ENCODE measurements at regions of chr17 and their contacts with region 1.

Region 1: GRCh38 chr17:46154151-46154816 is 38.9 kb downstream of the KANSL1 start:
- DNase-seq: no peak
- H3K4me3 Mint-ChIP-seq: peak overlapping the region; percentile 26
- H3K27ac Mint-ChIP-seq: peak overlapping the region; percentile 76
- H3K4me1 Mint-ChIP-seq: peaks cover 63% of the 10 kb centered on the region
- H3K27me3 Mint-ChIP-seq: no peaks in the 10 kb centered on the region

Region 2: DNA sequence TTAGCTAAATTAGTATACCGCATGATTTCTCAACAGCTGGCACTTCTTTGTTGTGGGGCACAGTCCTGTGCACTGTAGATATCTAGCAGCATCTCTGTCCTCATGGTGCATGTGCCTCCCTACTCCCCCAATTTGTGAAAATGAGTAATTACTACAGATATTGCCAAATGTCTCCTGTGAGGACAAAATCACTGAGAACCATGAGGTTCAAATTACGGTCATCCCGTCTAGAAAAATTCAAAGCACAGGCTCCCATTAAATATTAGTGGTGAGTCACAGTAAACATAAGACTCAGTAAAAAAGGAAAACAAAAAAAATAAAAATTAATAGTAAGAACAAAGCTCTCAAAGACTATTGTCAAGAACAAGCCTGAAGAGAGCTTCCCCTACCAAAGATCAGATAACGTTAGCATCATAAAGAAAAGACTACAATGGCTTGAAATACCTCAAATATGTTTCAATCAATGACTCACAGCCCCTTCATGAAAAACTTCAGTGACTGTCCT is 97.4 kb before region 1 on chr17:
- intact Hi-C with region 1: loop called (anchors 2 kb)
- DNase-seq: no peak
- H3K4me3 Mint-ChIP-seq: no peak overlapping the region
- H3K27ac Mint-ChIP-seq: peak overlapping the region; percentile 78
- H3K4me1 Mint-ChIP-seq: peaks cover 44% of the 10 kb centered on the region
- H3K27me3 Mint-ChIP-seq: no peaks in the 10 kb centered on the region

Region 3: DNA sequence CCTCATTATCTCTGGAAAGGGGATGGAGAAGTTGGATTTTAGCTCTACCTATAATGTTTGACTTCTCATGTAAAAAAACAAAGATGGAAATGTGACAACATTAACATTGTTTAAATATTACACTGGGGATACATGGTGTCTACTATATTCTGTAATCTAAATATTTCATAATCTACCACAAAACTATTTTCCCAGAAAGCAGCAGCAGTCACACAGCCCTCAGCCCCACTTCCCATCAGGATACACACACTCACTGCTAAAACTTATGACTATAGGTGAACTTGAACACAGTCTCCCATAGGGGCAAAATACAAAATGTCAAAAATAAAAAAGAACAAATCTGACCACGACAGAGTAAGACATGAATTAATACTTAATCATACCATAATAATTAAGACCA is 56.8 kb before region 1 on chr17:
- intact Hi-C with region 1: loop called (anchors 1 kb)
- DNase-seq: no peak
- H3K4me3 Mint-ChIP-seq: no peak overlapping the region
- H3K27ac Mint-ChIP-seq: no peak overlapping the region
- H3K4me1 Mint-ChIP-seq: peaks cover 36% of the 10 kb centered on the region
- H3K27me3 Mint-ChIP-seq: no peaks in the 10 kb centered on the region

Region 4: GRCh38 chr17:46121841-46122485 is 32.3 kb before region 1 on chr17:
- intact Hi-C with region 1: loop called (anchors 1 kb)
- DNase-seq: no peak
- H3K4me3 Mint-ChIP-seq: no peak overlapping the region
- H3K27ac Mint-ChIP-seq: peak overlapping the region; percentile 8
- H3K4me1 Mint-ChIP-seq: peaks cover 41% of the 10 kb centered on the region
- H3K27me3 Mint-ChIP-seq: no peaks in the 10 kb centered on the region

Region 5: DNA sequence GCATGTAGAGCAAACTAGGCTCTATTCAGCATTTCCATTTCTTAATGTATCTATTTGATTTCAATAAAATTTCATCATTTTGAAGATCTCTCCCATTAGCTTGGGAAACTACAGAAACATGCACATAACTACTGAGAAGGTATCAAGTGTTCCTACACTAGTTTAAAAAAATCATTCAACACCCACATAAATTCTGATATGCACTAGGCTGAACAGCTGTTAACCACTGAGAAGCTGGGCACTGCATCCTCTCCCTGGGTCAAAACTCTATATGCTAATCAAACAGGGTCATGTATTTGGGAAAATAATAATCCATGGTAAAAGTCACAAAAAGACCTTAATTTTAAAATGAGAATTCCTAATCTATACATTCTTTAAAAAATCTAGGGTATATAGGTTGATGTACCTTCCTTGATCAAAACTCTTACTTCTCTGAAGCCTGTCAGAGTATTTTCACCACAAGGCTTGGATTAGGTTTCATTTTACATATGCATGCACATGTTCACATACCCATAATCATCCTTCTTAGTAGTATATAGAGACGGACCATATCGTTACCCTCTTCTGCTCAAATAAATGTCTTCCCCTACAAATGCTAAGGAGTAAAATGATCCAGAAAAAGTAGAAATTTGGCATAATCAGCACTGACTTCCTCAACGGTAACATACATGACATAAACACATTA is 18.3 kb before region 1 on chr17:
- intact Hi-C with region 1: loop called (anchors 2 kb)
- DNase-seq: no peak
- H3K4me3 Mint-ChIP-seq: no peak overlapping the region
- H3K27ac Mint-ChIP-seq: no peak overlapping the region
- H3K4me1 Mint-ChIP-seq: peaks cover 69% of the 10 kb centered on the region
- H3K27me3 Mint-ChIP-seq: no peaks in the 10 kb centered on the region

Region 6: DNA sequence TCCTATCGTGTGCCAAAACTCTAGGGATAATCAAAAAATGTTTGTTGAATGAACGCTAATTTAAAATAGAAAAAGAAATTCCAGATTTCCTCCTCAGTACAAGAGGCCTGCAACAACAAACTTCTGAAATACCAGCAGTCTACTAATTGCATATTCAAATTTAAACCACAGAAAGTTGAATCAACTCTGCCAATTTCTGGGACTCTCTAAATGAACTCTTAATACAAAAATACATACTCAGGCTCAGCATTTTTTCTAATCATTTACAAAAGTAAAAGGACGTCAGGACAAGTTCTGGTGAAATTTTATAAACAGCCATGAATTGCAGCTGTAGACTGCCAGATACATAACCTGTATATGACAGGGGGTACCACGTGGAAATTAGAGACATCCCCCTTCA is 10.0 kb before region 1 on chr17:
- intact Hi-C with region 1: loop called (anchors 1 kb)
- DNase-seq: no peak
- H3K4me3 Mint-ChIP-seq: no peak overlapping the region
- H3K27ac Mint-ChIP-seq: peak overlapping the region; percentile 26
- H3K4me1 Mint-ChIP-seq: peaks cover 75% of the 10 kb centered on the region
- H3K27me3 Mint-ChIP-seq: no peaks in the 10 kb centered on the region

Region 7: GRCh38 chr17:46179375-46179999 is 25.2 kb after region 1 on chr17:
- intact Hi-C with region 1: loop called (anchors 2 kb)
- DNase-seq: no peak
- H3K4me3 Mint-ChIP-seq: peak overlapping the region; percentile 58
- H3K27ac Mint-ChIP-seq: peak overlapping the region; percentile 82
- H3K4me1 Mint-ChIP-seq: peaks cover 66% of the 10 kb centered on the region
- H3K27me3 Mint-ChIP-seq: no peaks in the 10 kb centered on the region